Heart right ventricle (tissue), 16 donors: ENCODE measurements at regions of chr15 and their contacts with region 1.

Region 1: GRCh38 chr15:95770191-95770590 is 560.3 kb upstream of the NR2F2 start:
- DNase-seq: no peak
- ATAC-seq: no peak
- H3K4me3 ChIP-seq: no peak overlapping the region
- H3K27ac ChIP-seq: no peak overlapping the region
- H3K4me1 ChIP-seq: no peaks in the 10 kb centered on the region
- H3K27me3 ChIP-seq: no peaks in the 10 kb centered on the region
- CTCF ChIP-seq: no peak

Region 2: GRCh38 chr15:95724908-95725633 is 45.1 kb before region 1 on chr15:
- intact Hi-C with region 1: loop called in 1 of 10 experiments (anchors 5 kb)
- DNase-seq: no peak
- ATAC-seq: no peak
- H3K4me3 ChIP-seq: no peak overlapping the region
- H3K27ac ChIP-seq: no peak overlapping the region
- H3K4me1 ChIP-seq: no peaks in the 10 kb centered on the region
- H3K27me3 ChIP-seq: no peaks in the 10 kb centered on the region
- CTCF ChIP-seq: no peak